ENCODE measurements at regions of chr15 and their contacts with region 1.

Region 1: DNA sequence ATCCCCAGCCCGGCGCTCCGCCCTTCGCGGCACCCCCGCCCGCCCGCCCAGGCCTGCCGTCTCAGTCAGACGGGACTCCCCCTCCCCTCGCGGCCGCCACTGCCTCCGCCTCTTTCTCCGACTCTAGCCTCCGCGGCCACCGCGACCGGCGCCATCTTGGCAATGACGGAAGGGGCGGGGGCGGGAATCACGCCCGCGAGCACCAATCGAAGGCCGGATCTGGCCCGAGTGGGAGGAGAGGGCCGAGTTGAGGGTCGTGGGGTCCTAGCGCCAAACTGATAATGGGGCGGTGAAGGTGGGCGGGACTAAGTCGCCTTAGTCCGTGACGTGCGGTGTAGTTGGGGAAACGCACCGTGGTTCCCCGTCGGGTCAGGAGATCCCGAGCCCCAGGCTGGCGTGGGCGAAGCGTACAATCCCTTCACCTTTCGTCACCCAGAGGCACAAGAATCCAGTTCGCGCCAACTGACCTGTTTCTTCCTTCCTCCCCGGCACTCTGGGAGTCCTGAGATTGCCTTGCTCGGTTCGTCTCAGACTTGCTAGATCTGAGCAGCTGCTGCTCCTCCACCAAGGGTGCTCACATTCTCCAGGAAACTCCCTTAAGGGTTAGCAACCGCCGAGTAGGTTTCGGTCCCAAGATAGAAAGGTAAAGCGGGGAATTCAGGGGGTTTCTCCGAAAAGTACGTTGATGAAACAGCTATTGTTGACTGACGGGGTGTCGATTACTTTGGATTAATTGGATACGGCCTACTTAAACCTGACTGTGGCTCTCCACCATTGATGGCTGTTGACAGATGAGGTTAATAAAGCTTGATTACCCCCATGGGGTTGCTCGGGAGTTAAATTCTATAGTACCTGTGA is at the start of gene DENND4A:
- DNase-seq: peak; percentile 96 to 99 (median 99)
- ATAC-seq: peak; percentile 76 to 81
- H3K4me3 Mint-ChIP-seq: peak within 1 kb of the TSS; percentile 85 to 99 (median 94)
- H3K27ac Mint-ChIP-seq: peak within 1 kb of the TSS; percentile 94 to 100 (median 98)
- H3K4me1 Mint-ChIP-seq: peaks cover 15 to 58% (median 37%) of the 10 kb centered on the region in 4 donors
- H3K27me3 Mint-ChIP-seq: no peaks in the 10 kb centered on the region
- polyA plus RNA-seq, gene DENND4A: 9.3 to 12.0 (median 11.2) TPM

Region 2: DNA sequence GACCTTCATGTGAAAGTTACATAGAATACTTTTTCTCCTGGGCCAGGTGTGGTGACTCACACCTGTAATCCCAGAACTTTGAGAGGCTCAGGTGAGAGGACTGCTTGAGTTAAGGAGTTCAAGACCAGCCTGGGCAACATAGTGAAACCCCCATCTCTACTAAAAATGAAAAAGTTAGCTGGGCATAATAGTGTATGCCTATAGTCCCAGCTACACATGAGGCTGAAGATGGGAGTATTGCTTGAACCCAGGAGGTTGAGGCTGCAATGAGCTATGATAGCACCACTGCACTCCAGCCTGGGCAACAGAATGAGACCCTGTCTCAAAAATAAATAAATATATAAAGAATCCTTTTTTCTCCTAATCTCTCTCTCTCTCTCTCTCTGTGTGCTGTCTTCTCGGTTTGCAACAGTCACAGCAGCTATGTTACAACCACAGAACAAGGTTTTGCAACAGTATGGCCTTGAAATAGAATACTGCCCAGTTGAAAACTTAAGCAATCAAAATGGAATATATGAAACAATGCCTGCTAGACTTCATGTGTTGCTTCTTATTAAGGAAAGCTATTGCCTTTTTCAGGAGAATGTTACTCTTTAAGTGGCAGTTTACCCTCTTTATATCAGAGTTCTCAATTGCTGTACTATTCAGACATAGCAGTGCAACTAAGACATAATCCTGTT is 12.0 kb after region 1 on chr15:
- POLR2A ChIA-PET with region 1: interaction called, 95 read pairs
- DNase-seq: no peak
- ATAC-seq: no peak
- H3K4me3 Mint-ChIP-seq: no peak overlapping the region
- H3K27ac Mint-ChIP-seq: peak overlapping the region in 9 of 10 donors; percentile 52 to 98 (median 86)
- H3K4me1 Mint-ChIP-seq: peaks cover 8 to 37% (median 33%) of the 10 kb centered on the region in 4 donors
- H3K27me3 Mint-ChIP-seq: no peaks in the 10 kb centered on the region

Region 3: DNA sequence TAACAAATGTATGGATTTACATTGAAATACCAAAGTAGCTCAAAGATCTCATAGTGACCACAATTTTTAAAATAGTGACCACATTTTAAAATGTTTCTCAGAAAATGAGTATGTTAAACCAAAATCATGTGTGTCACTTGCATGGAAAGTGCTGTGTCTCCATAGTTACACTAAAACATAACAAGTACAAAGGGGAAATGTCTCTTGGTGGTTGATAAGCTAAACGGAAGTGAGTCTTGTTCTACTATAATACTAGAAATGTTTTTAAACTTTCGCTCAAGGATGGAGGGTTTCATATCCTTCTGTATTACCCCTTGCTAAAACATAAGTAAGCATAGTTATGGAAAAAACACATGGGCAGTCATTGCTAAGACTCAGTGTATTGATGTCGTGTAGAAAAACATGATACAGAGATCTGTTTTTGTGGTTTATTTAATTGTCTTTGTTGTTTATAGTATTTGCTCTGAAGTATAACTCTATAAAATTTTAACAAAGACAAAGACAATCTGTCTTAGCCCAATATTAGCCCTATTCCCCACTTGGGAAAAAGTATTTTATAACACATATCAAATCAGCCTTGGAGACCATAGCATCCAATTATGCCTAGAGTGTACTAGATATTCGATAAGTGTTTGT is 26.7 kb after region 1 on chr15:
- POLR2A ChIA-PET with region 1: interaction called, 97 read pairs
- DNase-seq: peak in 6 of 10 donors; percentile 28 to 93 (median 76)
- ATAC-seq: peak; percentile 91 to 95
- H3K4me3 Mint-ChIP-seq: peak overlapping the region; percentile 13 to 90 (median 75)
- H3K27ac Mint-ChIP-seq: peak overlapping the region; percentile 94 to 99 (median 98)
- H3K4me1 Mint-ChIP-seq: peaks cover 16 to 76% (median 51%) of the 10 kb centered on the region in 4 donors
- H3K27me3 Mint-ChIP-seq: no peaks in the 10 kb centered on the region

Region 4: DNA sequence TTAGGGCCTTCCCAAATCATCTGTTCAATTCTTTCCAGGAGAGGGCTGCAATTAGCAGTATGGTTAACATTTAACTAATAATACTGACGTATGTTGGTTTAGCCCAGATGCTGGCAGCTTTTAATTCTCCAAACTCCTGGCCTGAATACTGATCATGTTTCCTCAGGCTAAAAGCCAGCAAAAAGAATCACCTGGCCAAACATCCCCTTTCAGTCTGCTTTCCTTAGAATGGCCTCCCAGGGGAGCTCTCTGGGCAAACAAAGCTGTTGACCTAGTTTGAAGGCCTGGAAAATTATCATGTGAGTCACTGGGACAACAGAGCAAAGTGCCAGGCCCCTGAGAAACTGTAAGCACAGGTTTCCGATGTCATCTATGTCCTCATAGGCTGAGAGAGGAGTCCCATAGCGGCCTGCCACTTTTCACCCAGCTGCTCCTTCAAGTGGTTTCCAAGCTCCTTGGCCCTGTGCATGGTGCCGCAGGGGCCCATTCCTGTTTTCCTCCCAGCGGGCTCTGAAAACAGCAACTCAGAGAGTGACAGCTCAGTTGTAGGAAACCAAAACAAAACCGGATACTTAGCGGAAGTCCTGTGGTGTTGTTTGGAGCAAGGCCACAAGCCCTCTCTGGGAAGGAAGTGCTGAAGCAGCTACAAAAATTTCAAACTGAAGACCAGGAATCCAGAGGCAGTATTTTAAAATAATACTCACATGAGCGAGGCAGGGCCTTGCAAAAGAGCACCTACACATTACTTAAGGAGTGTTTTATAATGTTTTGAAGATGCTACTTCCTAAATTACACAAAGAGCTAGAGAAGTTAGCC is 40.4 kb after region 1 on chr15:
- POLR2A ChIA-PET with region 1: interaction called, 47 read pairs
- DNase-seq: peak; percentile 27 to 73 (median 48)
- ATAC-seq: peak; percentile 57 to 60
- H3K4me3 Mint-ChIP-seq: peak overlapping the region; percentile 69 to 91 (median 81)
- H3K27ac Mint-ChIP-seq: peak overlapping the region; percentile 92 to 98 (median 96)
- H3K4me1 Mint-ChIP-seq: peaks cover 24 to 65% (median 51%) of the 10 kb centered on the region in 4 donors
- H3K27me3 Mint-ChIP-seq: no peaks in the 10 kb centered on the region